PC-9 (cell line): ENCODE measurements at regions of chr7 and their contacts with region 1.

Region 1: GRCh38 chr7:97145068-97145467 is 27.6 kb downstream of the SDHAF3 start:
- DNase-seq: no peak
- H3K4me3 ChIP-seq: no peak overlapping the region
- H3K27ac ChIP-seq: no peak overlapping the region
- H3K4me1 ChIP-seq: no peaks in the 10 kb centered on the region
- H3K27me3 ChIP-seq: no peaks in the 10 kb centered on the region
- CTCF ChIP-seq: peak; percentile 74

Region 2: DNA sequence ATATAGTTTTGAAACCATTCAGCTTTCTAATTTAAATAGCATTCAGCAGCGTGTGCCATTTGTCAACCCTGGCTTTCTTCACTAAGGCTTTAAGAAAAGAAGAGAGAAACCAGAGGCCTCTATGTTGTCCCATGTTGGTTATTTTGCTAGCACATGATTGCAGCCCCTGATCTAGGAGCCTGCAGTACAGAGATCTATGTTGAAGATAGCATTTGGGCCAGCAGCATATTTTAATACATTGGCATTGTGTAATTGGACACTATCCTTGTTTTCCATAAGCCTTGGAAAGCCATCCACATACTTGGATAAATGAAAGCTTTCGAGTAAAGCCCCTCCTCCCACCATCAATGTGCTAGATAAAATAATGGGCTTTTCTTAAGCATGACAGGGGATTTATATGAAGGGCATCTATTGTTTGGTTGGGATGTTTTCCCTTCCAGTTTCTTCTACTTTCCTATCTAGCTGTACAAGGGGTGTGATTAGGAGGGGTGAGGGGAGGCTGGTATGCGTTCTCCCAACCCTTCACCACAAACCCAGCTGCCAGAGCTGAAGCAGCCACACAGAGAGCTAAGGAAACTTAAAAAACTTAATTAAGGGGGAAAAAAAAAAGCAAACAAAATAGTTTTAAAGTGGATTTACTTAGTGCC is 50.7 kb before region 1 on chr7:
- CTCF ChIA-PET with region 1: no interaction called
- POLR2A ChIA-PET with region 1: no interaction called
- intact Hi-C with region 1: no loop called
- DNase-seq: no peak
- H3K4me3 ChIP-seq: no peak overlapping the region
- H3K27ac ChIP-seq: no peak overlapping the region
- H3K4me1 ChIP-seq: no peaks in the 10 kb centered on the region
- H3K27me3 ChIP-seq: peaks cover 22% of the 10 kb centered on the region
- CTCF ChIP-seq: no peak

Region 3: GRCh38 chr7:97179454-97180104 is 34.5 kb after region 1 on chr7:
- CTCF ChIA-PET with region 1: interaction called, 11 read pairs
- POLR2A ChIA-PET with region 1: no interaction called
- intact Hi-C with region 1: no loop called
- DNase-seq: peak in 1 of 2 experiments; percentile 27
- H3K4me3 ChIP-seq: no peak overlapping the region
- H3K27ac ChIP-seq: no peak overlapping the region
- H3K4me1 ChIP-seq: no peaks in the 10 kb centered on the region
- H3K27me3 ChIP-seq: no peaks in the 10 kb centered on the region
- CTCF ChIP-seq: peak; percentile 80

Region 4: GRCh38 chr7:97835296-97836138 is 690.4 kb after region 1 on chr7:
- CTCF ChIA-PET with region 1: interaction called, 11 read pairs
- POLR2A ChIA-PET with region 1: no interaction called
- intact Hi-C with region 1: loop called (anchors 5 kb)
- DNase-seq: peak; percentile 42 to 51
- H3K4me3 ChIP-seq: no peak overlapping the region
- H3K27ac ChIP-seq: no peak overlapping the region
- H3K4me1 ChIP-seq: no peaks in the 10 kb centered on the region
- H3K27me3 ChIP-seq: peaks cover 42% of the 10 kb centered on the region
- CTCF ChIP-seq: peak; percentile 83

Region 5: GRCh38 chr7:98014352-98014751 is 869.3 kb after region 1 on chr7:
- CTCF ChIA-PET with region 1: interaction called, 10 read pairs
- POLR2A ChIA-PET with region 1: no interaction called
- intact Hi-C with region 1: no loop called
- DNase-seq: no peak
- H3K4me3 ChIP-seq: no peak overlapping the region
- H3K27ac ChIP-seq: no peak overlapping the region
- H3K4me1 ChIP-seq: no peaks in the 10 kb centered on the region
- H3K27me3 ChIP-seq: no peaks in the 10 kb centered on the region
- CTCF ChIP-seq: no peak